Activated naive CD4-positive, alpha-beta T cell treated with anti-CD3 and anti-CD28 coated beads for 36 hours (primary cell): ENCODE measurements at regions of chr5 and their contacts with region 1.

Region 1: DNA sequence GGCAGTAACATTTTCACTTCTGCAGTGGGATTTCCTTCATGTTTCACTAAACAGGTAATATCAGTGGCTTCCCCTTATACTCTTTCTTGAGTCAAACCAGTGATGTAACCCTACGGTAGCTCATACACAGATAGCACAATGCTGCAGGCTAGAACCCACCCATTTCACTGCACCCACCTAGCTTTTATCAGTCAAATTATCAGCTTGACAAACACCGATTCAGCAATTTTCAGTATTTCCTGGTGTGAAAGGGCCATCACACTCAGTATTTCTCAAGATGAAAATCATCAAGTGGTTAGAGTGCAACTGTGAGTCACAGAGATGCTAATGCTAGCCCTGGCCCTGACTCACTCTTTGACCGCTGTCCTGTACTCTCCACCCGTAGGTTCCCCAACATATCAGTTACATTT is 242.3 kb upstream of the PTGER4 start:
- DNase-seq: peak; percentile 19
- H3K4me3 Mint-ChIP-seq: no peak overlapping the region
- H3K27ac Mint-ChIP-seq: peak overlapping the region; percentile 94
- H3K4me1 Mint-ChIP-seq: peaks cover 81% of the 10 kb centered on the region
- H3K27me3 Mint-ChIP-seq: no peaks in the 10 kb centered on the region

Region 2: GRCh38 chr5:40171971-40172370 is 265.5 kb before region 1 on chr5:
- CTCF ChIA-PET with region 1: no interaction called
- intact Hi-C with region 1: loop called (anchors 5 kb)
- DNase-seq: no peak
- H3K4me3 Mint-ChIP-seq: no peak overlapping the region
- H3K27ac Mint-ChIP-seq: no peak overlapping the region
- H3K4me1 Mint-ChIP-seq: peaks cover 6% of the 10 kb centered on the region
- H3K27me3 Mint-ChIP-seq: no peaks in the 10 kb centered on the region

Region 3: DNA sequence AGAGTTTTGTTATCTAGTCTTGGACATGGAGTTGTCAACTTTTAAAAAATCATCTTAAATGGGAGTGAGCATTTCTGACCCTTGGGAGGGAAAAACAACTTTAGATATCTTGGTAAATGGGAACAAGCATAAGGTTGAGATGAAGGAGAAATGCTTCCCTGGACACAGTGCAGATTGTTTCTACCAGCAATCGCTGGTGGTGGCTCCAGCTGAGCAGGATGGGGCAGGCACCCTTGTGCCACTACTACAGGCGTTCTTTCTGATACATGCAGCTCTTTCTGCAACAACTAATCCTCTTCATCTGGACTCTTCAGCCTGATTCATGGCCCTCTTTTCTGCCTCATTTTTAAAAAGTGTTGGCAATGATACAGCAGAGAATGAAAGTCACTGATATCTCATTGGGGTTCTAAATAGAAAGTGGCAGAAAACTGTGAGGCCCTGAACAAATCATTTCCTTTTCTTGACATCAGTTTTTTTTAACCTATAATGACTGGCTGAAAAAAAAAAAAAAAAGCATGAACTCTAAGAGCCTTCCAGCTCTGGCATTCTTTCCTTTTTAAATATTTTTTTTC is 167.1 kb before region 1 on chr5:
- CTCF ChIA-PET with region 1: no interaction called
- intact Hi-C with region 1: no loop called
- DNase-seq: peak; percentile 20
- H3K4me3 Mint-ChIP-seq: no peak overlapping the region
- H3K27ac Mint-ChIP-seq: peak overlapping the region; percentile 84
- H3K4me1 Mint-ChIP-seq: peaks cover 54% of the 10 kb centered on the region
- H3K27me3 Mint-ChIP-seq: no peaks in the 10 kb centered on the region

Region 4: DNA sequence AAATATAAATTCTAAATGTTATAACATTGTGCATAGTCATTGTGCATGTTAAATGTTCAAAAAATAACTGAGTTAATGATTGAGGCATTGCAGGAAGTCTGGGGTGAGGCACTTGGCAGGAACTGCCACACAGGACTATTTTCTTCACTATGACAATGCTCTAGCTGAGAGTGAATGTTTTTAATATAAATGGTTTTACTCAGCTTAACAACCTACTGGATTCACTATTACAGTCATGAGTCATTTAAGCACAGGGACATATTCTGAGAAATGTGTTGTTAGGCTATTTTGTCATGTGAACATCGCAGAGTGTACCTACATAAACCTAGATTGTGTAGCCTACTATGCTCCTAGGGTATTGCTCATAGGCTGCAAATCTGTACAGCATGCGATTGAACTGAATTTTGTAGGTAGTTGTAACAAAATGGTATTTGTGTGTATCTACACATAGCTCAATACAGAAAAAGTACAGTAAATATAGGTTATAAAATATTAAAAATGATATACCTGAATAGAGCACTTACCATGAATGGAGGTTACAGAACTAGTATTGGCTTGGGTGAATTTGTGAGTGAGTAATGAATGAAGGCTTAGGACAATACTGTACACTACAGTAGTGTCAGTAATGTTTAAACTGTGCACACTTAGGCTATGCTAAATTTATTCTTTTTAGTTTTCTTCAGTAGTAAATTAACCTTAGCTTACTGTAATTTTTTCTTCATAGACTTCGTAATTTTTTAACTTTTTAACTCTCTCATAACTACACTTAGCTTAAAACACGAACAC is 103.8 kb before region 1 on chr5:
- CTCF ChIA-PET with region 1: no interaction called
- intact Hi-C with region 1: loop called (anchors 1 kb)
- DNase-seq: peak; percentile 63
- H3K4me3 Mint-ChIP-seq: no peak overlapping the region
- H3K27ac Mint-ChIP-seq: peak overlapping the region; percentile 41
- H3K4me1 Mint-ChIP-seq: peaks cover 15% of the 10 kb centered on the region
- H3K27me3 Mint-ChIP-seq: peaks cover 3% of the 10 kb centered on the region

Region 5: GRCh38 chr5:40404613-40405012 is 32.8 kb before region 1 on chr5:
- CTCF ChIA-PET with region 1: interaction called, 18 read pairs
- intact Hi-C with region 1: loop called (anchors 5 kb)
- DNase-seq: no peak
- H3K4me3 Mint-ChIP-seq: peak overlapping the region; percentile 33
- H3K27ac Mint-ChIP-seq: peak overlapping the region; percentile 99
- H3K4me1 Mint-ChIP-seq: peaks cover 89% of the 10 kb centered on the region
- H3K27me3 Mint-ChIP-seq: no peaks in the 10 kb centered on the region

Region 6: GRCh38 chr5:40410231-40410861 is 27.1 kb before region 1 on chr5:
- CTCF ChIA-PET with region 1: interaction called, 18 read pairs
- intact Hi-C with region 1: loop called (anchors 1 kb)
- DNase-seq: peak; percentile 88
- H3K4me3 Mint-ChIP-seq: peak overlapping the region; percentile 58
- H3K27ac Mint-ChIP-seq: peak overlapping the region; percentile 98
- H3K4me1 Mint-ChIP-seq: peaks cover 64% of the 10 kb centered on the region
- H3K27me3 Mint-ChIP-seq: no peaks in the 10 kb centered on the region

Region 7: DNA sequence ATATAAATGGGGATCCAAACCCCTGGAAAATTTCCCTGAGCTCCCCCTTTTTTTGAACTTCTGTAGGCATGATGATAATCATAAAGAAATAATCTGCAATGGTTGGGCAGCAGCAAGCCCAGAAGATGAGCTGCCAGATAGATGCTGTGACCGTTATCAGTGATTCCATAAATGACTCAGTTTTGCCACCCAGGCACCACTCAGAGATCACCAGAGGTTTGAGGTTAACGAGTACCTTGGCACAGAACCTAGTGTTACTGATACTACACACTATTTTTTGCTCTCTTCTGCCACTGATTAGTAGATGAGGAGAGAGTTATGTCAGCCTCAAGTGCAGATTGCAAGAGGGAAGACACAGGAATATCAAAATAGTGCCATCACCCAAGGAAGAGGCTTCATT is 42.9 kb after region 1 on chr5:
- CTCF ChIA-PET with region 1: interaction called, 4 read pairs
- intact Hi-C with region 1: loop called (anchors 1 kb)
- DNase-seq: peak; percentile 62
- H3K4me3 Mint-ChIP-seq: no peak overlapping the region
- H3K27ac Mint-ChIP-seq: peak overlapping the region; percentile 80
- H3K4me1 Mint-ChIP-seq: peaks cover 51% of the 10 kb centered on the region
- H3K27me3 Mint-ChIP-seq: no peaks in the 10 kb centered on the region